AG04449 (cell line): ENCODE measurements at regions of chr12 and their contacts with region 1.

Region 1: GRCh38 chr12:100554608-100555077 is 18.8 kb upstream of the GAS2L3 start:
- DNase-seq: peak; percentile 63
- H3K4me3 ChIP-seq: no peak overlapping the region
- CTCF ChIP-seq: peak; percentile 73

Region 2: GRCh38 chr12:100566887-100567637 is 12.4 kb after region 1 on chr12:
- CTCF ChIA-PET with region 1: interaction called, 13 read pairs
- POLR2A ChIA-PET with region 1: no interaction called
- DNase-seq: no peak
- H3K4me3 ChIP-seq: no peak overlapping the region
- CTCF ChIP-seq: no peak